Right cardiac atrium (tissue), 5 donors: ENCODE measurements at regions of chr17 and their contacts with region 1.

Region 1: DNA sequence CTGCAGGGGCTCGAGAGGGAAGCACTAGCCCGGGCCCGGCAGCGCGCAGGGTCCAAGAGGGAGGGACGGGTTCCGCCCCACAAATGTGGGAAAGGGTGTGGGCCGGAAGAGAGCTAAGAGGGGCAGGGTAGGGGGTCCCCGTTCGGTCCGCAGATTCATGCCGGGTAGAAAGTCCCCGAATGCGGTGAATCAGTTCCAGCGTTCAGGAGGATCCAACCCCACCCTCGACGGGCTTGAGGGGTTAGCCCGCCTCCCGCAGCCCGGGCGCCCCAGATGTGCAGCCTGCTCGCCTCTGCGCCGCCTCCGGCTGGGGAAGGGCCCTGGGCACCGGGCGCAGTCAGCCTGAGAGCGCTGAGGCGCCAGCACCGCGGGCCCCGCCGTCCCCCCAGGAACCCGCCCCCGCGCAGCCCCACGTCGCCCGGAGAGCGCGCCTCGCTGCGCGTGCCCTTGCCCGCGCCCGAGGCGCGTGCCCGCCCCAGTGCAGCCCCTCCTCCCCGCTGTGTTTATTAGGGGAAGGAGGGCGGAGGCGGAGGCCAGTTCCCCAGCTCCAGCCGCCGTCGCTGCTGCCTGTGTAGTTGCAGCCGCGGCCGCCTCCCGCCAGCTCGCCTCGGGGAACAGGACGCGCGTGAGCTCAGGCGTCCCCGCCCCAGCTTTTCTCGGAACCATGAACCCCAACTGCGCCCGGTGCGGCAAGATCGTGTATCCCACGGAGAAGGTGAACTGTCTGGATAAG is at the start of gene LASP1:
- DNase-seq: peak; percentile 89 to 96 (median 96)
- ATAC-seq: peak; percentile 88 to 90
- H3K4me3 ChIP-seq: peak within 1 kb of the TSS; percentile 83
- H3K27ac ChIP-seq: peak within 1 kb of the TSS; percentile 94
- H3K4me1 ChIP-seq: peaks cover 21% of the 10 kb centered on the region
- H3K27me3 ChIP-seq: no peaks in the 10 kb centered on the region
- total RNA-seq, gene LASP1: 29.2 to 39.6 (median 35.8) TPM

Region 2: GRCh38 chr17:38970128-38970527 is 100.4 kb after region 1 on chr17:
- intact Hi-C with region 1: loop called in 1 of 4 experiments (anchors 10 kb)
- DNase-seq: no peak
- ATAC-seq: no peak
- H3K4me3 ChIP-seq: no peak overlapping the region
- H3K27ac ChIP-seq: no peak overlapping the region
- H3K4me1 ChIP-seq: no peaks in the 10 kb centered on the region
- H3K27me3 ChIP-seq: no peaks in the 10 kb centered on the region